ENCODE measurements at regions of chr11 and their contacts with region 1.

Region 1: GRCh38 chr11:2420502-2421225 is 20.1 kb downstream of the TSSC4 start:
- DNase-seq: peak; percentile 99
- H3K4me3 ChIP-seq: no peak overlapping the region; a peak in 1 of 4 replicates
- H3K27ac ChIP-seq: no peak overlapping the region
- H3K4me1 ChIP-seq: no peaks in the 10 kb centered on the region; a peak in 1 of 4 replicates
- H3K27me3 ChIP-seq: no peaks in the 10 kb centered on the region
- CTCF ChIP-seq: peak; percentile 85
- EP300 ChIP-seq: no peak
- RAD21 ChIP-seq: peak; percentile 91

Region 2: GRCh38 chr11:2166091-2166851 is 254.4 kb before region 1 on chr11:
- CTCF ChIA-PET with region 1: interaction called, 19 read pairs
- POLR2A ChIA-PET with region 1: no interaction called
- DNase-seq: no peak
- H3K4me3 ChIP-seq: no peak overlapping the region
- H3K27ac ChIP-seq: no peak overlapping the region
- H3K4me1 ChIP-seq: peaks cover 0 to 44% of the 10 kb centered on the region in 2 experiments; a peak in 1 of 4 replicates
- H3K27me3 ChIP-seq: no peaks in the 10 kb centered on the region
- CTCF ChIP-seq: no peak
- EP300 ChIP-seq: no peak
- RAD21 ChIP-seq: no peak

Region 3: DNA sequence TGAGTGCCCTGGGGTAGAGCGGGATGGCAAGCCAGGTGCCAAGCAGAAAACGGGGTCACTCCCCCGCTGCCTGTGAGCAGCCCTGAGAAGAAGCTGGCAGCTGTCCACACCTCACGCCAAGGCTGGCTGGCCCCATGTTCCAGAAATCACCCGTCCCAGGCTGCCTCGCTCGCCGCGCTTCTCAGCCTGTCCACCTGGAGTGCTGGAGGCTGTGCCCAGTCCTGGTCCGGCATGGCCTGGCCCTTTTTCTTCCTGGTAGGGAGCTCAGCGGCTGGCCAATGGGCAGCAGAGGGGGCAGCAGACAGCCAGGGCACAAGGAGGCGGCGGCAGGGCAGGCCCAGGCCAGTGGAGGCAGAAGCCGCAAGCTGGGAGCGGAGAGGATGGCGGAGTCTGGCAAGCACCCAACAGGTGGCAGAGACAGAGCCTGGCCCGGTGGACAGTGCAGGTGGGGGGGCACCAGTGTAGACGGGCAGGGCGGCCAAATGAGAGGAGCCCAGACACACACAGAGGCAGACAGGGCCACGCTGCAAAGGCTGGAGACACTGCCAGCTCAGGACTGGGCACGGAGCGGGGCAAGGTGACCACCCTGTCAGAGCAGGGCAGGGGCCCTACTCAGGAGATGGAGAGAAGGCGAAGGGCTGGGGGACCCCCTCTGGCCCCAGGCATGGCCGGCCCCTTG is 211.8 kb before region 1 on chr11:
- CTCF ChIA-PET with region 1: interaction called, 143 read pairs
- POLR2A ChIA-PET with region 1: no interaction called
- DNase-seq: peak; percentile 72
- H3K4me3 ChIP-seq: no peak overlapping the region
- H3K27ac ChIP-seq: no peak overlapping the region; a peak in 1 of 4 replicates
- H3K4me1 ChIP-seq: peaks cover 0 to 21% of the 10 kb centered on the region in 2 experiments; a peak in 1 of 4 replicates
- H3K27me3 ChIP-seq: no peaks in the 10 kb centered on the region
- CTCF ChIP-seq: no peak
- EP300 ChIP-seq: no peak
- RAD21 ChIP-seq: no peak

Region 4: DNA sequence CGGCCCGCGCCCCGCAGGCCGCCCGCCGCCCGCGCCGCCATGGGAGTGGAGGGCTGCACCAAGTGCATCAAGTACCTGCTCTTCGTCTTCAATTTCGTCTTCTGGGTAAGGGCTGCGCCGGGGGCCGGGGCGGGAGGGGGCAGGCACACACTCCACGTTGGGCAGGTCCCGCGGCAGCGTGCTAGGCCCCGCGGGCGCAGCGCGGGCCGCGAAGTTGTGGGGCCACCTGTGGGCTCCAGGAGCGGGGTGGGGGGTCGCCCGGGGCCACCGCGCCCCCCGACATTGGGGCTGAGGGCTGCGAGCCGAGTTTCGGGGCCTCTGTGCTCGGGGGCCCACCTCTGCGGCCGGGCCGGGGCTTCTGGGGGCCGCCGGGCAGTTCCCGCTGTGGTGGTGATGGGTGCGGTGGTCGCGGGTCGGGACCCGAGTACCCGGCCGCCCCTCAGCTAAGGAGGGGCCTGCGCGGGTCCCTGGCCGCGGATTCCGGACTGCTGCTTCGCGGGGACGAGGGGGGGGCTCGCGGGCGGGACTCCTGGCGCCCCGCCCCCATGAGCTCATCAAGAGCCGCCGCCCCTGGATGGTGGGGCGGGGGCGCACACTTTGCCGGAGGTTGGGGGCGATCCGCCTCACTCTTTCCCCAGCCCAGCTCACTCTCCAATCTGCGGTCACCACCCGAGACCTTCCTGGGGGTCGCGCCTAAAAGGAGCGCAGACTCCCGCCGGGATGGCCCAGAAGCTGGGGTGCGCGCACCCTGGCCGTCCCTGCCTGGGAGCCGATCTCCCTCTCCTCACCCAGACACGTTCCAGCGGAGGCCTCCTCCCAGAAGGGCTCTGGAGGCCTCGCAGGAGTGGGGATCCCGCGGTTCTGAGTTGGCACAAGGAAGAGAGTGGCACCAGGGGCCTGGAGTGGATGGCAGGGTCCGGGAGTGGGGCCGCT is 42.9 kb before region 1 on chr11:
- CTCF ChIA-PET with region 1: interaction called, 20 read pairs
- POLR2A ChIA-PET with region 1: no interaction called
- DNase-seq: peak; percentile 95
- H3K4me3 ChIP-seq: peak overlapping the region; percentile 68 to 80
- H3K27ac ChIP-seq: peak overlapping the region; percentile 68 to 74
- H3K4me1 ChIP-seq: peaks cover 0 to 16% of the 10 kb centered on the region in 2 experiments; a peak in 2 of 4 replicates
- H3K27me3 ChIP-seq: no peaks in the 10 kb centered on the region
- CTCF ChIP-seq: no peak
- EP300 ChIP-seq: no peak
- RAD21 ChIP-seq: no peak

Region 5: GRCh38 chr11:2409611-2410468 is 10.8 kb before region 1 on chr11:
- CTCF ChIA-PET with region 1: interaction called, 166 read pairs
- POLR2A ChIA-PET with region 1: interaction called, 6 read pairs
- DNase-seq: no peak
- H3K4me3 ChIP-seq: no peak overlapping the region
- H3K27ac ChIP-seq: no peak overlapping the region
- H3K4me1 ChIP-seq: no peaks in the 10 kb centered on the region
- H3K27me3 ChIP-seq: no peaks in the 10 kb centered on the region
- CTCF ChIP-seq: no peak
- EP300 ChIP-seq: no peak
- RAD21 ChIP-seq: no peak

Region 6: DNA sequence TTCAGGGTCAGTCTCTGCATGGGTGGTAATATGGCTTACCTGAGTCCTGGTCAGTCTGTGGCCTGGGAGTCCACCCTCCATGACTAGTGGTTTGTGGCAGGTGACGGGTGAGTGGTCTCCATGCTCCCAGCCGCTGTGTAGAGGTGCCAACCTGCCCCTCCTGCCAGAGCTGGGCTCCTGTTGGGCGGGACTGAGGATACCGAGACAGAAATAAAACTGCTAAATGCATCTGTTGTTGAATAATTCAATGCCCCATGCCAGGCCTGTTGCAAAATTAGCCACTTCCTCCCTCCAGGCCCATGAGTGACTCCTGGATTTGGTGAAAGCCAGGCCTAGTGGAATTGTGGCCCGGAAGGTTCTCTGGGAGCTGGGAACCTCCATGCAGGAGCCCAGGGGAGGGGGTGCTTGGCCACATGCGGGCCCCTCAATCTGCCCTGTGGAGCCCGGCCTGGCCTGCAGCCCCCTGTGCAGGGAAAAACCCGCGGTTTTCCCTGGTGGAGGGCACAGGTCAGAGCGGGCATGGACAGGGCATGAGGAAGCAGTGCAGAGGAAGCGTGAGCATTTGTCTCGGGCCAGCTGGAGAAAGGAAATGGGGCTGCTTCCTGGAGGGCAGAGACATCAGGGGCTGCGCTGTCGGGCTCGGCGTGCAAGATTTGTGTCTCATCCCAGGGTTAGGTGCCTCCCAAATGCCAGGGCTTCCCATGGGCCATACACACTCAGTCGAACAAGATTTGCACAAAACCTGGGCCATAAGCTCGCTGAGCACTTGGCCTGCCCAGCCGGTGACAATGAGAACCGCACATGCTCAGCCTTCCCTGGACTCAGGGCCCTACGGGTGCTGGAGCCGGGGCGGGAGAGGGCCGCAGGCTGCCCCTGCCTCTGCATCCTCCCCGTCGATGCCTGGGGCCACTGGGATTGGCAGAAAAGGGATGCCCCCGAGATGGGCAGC is 91.0 kb after region 1 on chr11:
- CTCF ChIA-PET with region 1: interaction called, 21 read pairs
- POLR2A ChIA-PET with region 1: interaction called, 4 read pairs
- DNase-seq: peak; percentile 34
- H3K4me3 ChIP-seq: no peak overlapping the region
- H3K27ac ChIP-seq: no peak overlapping the region
- H3K4me1 ChIP-seq: peaks cover 0 to 9% of the 10 kb centered on the region in 2 experiments; a peak in 1 of 4 replicates
- H3K27me3 ChIP-seq: no peaks in the 10 kb centered on the region
- CTCF ChIP-seq: no peak
- EP300 ChIP-seq: no peak
- RAD21 ChIP-seq: no peak